Heart left ventricle (tissue), 16 donors: ENCODE measurements at regions of chr10 and their contacts with region 1.

Region 1: DNA sequence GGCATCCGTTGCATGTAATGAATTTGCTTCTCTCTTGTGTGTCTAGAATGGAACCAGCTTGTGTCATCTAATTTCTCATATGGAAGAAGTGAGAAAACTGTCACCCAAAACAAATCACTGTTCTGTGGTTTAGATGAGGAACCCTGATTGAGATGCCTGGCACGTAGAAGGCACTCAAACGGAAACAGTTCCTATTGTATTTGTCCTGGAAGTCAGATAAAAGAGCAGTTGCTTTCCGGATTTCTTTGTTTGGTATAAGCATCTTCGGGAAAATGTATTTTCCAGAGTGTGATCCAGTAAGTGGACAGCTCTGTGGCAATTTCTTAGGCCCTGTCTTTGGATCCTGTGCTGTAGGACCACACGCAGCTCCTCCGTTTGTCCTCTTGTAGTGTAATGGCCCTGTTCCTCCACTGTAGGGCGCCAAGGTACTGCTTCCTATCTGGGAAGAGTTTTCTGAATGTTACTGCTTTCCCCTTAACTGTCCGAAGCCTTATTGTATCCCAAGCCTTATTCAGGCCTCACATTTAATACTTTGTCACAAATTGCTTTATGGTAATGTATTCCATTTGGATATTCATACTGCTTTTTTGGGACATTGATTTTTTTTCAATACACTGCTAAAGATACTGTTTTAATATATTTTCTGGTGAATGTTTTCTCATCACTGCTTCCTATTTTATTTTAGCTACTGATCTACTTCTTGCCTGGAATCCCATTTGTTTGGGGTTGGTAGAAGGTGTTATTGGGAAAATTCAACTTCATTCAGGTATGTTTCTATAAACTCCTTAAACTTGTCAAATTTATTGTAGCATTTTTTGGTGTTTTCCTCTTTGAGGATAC is 24.8 kb downstream of the INPP5F start:
- DNase-seq: peak in 4 of 5 donors; percentile 59 to 71 (median 64)
- ATAC-seq: peak; percentile 78 to 99 (median 95)
- H3K4me3 ChIP-seq: no peak overlapping the region
- H3K27ac ChIP-seq: no peak overlapping the region
- H3K4me1 ChIP-seq: peaks cover 0 to 10% (median 0%) of the 10 kb centered on the region in 12 donors
- H3K27me3 ChIP-seq: no peaks in the 10 kb centered on the region
- CTCF ChIP-seq: peak; percentile 76 to 98 (median 90)
- POLR2A ChIP-seq: no peak

Region 2: DNA sequence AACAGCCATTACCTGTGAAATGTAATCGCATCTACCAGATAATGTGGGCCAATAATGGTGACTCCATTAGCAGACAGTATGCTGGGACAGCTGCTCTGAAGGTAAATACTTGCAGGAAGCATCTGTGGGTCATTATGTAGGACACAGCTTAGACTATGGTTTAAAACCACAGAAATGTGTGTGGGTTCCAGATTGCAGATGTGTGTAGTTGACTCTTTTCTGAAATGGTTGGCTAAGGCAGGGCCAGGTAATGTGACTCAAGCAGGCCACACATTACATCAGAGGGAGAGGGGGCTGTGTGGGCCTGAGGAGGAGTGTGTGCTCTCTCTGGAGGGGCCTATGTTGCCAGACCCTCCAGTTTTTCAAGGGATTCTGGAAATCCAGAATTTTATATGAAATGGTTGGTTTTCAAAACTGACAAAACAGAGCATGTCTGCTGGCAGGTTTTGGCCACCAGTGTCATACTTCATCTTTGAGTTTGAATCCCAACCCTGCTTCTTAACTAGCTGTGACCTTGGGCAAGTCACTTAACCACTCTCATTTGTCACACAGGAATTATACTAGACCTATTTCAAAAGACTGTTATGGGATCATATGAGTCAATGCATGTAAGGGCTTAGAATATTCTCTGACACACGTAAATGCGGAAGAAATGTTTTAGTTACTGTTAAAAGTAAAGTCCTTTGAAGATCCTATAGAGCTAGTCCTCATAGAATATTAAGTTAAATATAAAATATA is 57.5 kb after region 1 on chr10:
- intact Hi-C with region 1: loop called in 2 of 10 experiments (anchors 10 kb)
- DNase-seq: no peak
- ATAC-seq: no peak
- H3K4me3 ChIP-seq: no peak overlapping the region
- H3K27ac ChIP-seq: no peak overlapping the region
- H3K4me1 ChIP-seq: peaks cover 0 to 6% (median 0%) of the 10 kb centered on the region in 12 donors
- H3K27me3 ChIP-seq: no peaks in the 10 kb centered on the region
- CTCF ChIP-seq: no peak
- POLR2A ChIP-seq: no peak

Region 3: GRCh38 chr10:119817991-119818888 is 67.6 kb after region 1 on chr10:
- intact Hi-C with region 1: loop called in 1 of 10 experiments (anchors 10 kb)
- DNase-seq: peak; percentile 46 to 81 (median 60)
- ATAC-seq: peak in 3 of 4 donors; percentile 61 to 78 (median 71)
- H3K4me3 ChIP-seq: peak overlapping the region in 9 of 12 donors; percentile 10 to 43 (median 25)
- H3K27ac ChIP-seq: peak overlapping the region in 1 of 12 donors; percentile 39
- H3K4me1 ChIP-seq: peaks cover 0 to 5% (median 0%) of the 10 kb centered on the region in 12 donors
- H3K27me3 ChIP-seq: no peaks in the 10 kb centered on the region
- CTCF ChIP-seq: no peak
- POLR2A ChIP-seq: no peak

Region 4: DNA sequence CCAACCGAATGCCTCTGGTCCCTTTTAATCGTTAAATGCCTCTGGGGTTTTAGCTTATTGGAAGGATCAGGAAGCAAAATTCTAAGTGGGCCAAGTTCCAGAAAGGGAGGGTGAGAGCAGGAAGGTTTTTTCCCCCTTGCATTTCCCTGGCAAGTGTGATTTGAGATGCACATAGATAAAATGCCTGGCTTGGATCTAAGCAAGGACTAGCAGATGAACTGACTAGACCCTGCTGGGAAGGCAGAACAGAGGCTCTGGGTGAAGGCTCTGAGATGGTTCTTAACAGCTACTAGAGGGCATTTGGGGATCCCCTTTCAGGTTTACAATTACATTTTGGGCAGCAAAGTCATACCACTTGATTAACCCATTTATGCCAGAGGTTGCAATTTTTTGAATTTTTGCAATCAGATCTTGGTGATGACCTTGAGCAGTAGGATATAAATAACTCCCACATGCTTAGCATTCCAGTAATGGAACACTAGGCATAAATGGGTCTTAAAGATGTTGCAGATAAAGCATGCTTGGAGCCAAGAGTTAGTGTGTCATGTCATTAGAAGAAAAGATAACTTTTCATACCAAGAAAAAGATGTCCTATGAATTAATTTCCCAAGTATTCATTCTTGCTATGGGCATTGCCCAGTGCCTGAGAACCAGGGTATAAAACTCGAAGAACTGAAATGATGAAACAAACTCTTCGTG is 347.8 kb after region 1 on chr10:
- intact Hi-C with region 1: no loop called
- DNase-seq: no peak
- ATAC-seq: no peak
- H3K4me3 ChIP-seq: no peak overlapping the region
- H3K27ac ChIP-seq: no peak overlapping the region
- H3K4me1 ChIP-seq: no peaks in the 10 kb centered on the region
- H3K27me3 ChIP-seq: peaks cover 0 to 6% (median 0%) of the 10 kb centered on the region in 9 donors
- CTCF ChIP-seq: no peak
- POLR2A ChIP-seq: no peak

Region 5: GRCh38 chr10:120336911-120337540 is 586.4 kb after region 1 on chr10:
- intact Hi-C with region 1: loop called in 1 of 10 experiments (anchors 10 kb)
- DNase-seq: no peak
- ATAC-seq: no peak
- H3K4me3 ChIP-seq: no peak overlapping the region
- H3K27ac ChIP-seq: no peak overlapping the region
- H3K4me1 ChIP-seq: no peaks in the 10 kb centered on the region
- H3K27me3 ChIP-seq: peaks cover 0 to 11% (median 0%) of the 10 kb centered on the region in 9 donors
- CTCF ChIP-seq: peak; percentile 38 to 80 (median 57)
- POLR2A ChIP-seq: no peak